CD8-positive, alpha-beta memory T cell (primary cell): ENCODE measurements at regions of chr19 and their contacts with region 1.

Region 1: GRCh38 chr19:17522988-17523872 is 11.8 kb downstream of the PGLS start:
- DNase-seq: peak in 4 of 5 donors; percentile 18 to 64 (median 50)
- H3K4me3 ChIP-seq: peak overlapping the region; percentile 17
- H3K4me3 Mint-ChIP-seq: peak overlapping the region; percentile 15 to 91 (median 79)
- H3K27ac ChIP-seq: no peak overlapping the region
- H3K27ac Mint-ChIP-seq: peak overlapping the region; percentile 81 to 98 (median 88)
- H3K4me1 ChIP-seq: peaks cover 19% of the 10 kb centered on the region
- H3K4me1 Mint-ChIP-seq: peaks cover 24 to 31% (median 28%) of the 10 kb centered on the region in 3 donors
- H3K27me3 ChIP-seq: no peaks in the 10 kb centered on the region
- H3K27me3 Mint-ChIP-seq: no peaks in the 10 kb centered on the region

Region 2: GRCh38 chr19:17511724-17512573 is 11.3 kb before region 1 on chr19:
- CTCF ChIA-PET with region 1: interaction called, 4 read pairs
- POLR2A ChIA-PET with region 1: interaction called, 18 read pairs
- DNase-seq: peak; percentile 81 to 94 (median 89)
- H3K4me3 ChIP-seq: peak overlapping the region; percentile 87
- H3K4me3 Mint-ChIP-seq: peak overlapping the region; percentile 88 to 100 (median 96)
- H3K27ac ChIP-seq: peak overlapping the region; percentile 83
- H3K27ac Mint-ChIP-seq: peak overlapping the region; percentile 53 to 98 (median 92)
- H3K4me1 ChIP-seq: peaks cover 21% of the 10 kb centered on the region
- H3K4me1 Mint-ChIP-seq: peaks cover 30 to 50% (median 35%) of the 10 kb centered on the region in 3 donors
- H3K27me3 ChIP-seq: no peaks in the 10 kb centered on the region
- H3K27me3 Mint-ChIP-seq: no peaks in the 10 kb centered on the region

Region 3: DNA sequence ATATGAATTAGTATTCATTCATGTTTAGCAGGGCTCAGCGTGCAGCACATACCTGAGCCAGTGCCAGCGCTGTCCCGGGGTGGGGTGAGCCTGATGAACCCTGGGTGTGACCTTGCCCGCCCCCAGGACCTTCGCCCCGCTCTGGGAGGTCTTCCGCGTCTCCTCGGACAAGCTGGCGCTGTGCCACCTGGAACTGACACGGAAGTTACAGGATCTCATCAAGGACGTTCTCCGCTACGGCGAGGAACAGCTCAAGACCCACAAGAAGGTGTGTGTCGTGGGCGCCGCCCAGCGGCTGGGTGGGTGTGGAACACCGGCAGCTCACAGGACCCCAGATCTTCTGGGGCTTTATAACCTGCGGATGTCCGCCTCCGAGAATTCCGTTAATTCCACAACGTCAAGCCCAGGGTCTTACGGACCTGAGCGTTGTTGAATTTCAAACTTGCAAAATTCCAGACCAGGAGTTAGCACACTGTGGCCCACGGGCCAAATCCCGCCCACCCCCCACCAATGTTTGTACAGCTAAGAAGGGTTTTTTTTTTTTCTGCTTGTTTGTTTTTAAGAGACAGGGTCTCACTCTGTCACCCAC is 243.4 kb after region 1 on chr19:
- CTCF ChIA-PET with region 1: no interaction called
- POLR2A ChIA-PET with region 1: no interaction called
- DNase-seq: peak in 1 of 5 donors; percentile 33
- H3K4me3 ChIP-seq: no peak overlapping the region
- H3K4me3 Mint-ChIP-seq: no peak overlapping the region
- H3K27ac ChIP-seq: no peak overlapping the region
- H3K27ac Mint-ChIP-seq: no peak overlapping the region
- H3K4me1 ChIP-seq: no peaks in the 10 kb centered on the region
- H3K4me1 Mint-ChIP-seq: no peaks in the 10 kb centered on the region
- H3K27me3 ChIP-seq: no peaks in the 10 kb centered on the region
- H3K27me3 Mint-ChIP-seq: no peaks in the 10 kb centered on the region